Vagina (tissue), 2 donors: ENCODE measurements at regions of chr3 and their contacts with region 1.

Region 1: DNA sequence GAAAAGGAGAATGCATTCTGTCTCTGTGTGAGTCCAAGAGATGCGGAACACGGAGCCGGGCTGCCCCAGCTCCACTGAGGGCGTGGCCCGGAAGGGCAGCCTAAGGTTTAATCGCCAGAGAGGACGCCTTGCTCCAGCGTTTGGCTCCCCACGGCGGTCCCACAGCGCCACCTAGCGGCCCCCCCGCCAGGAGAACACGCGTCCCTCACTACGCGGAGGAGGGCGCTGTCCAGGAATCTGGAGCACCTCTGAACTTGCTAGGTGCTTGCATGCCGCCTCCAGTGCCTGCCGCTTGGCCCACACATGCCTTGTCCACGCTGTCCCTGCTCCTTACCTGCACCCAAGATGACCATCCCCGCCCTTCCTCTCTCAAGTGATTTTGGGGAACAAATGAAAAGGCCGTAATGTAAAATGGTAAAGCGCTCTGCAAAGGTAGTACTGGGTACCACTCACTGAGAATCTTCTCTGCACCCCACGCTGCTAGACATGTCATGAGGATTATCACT is 14.4 kb upstream of the MRPS22 start:
- DNase-seq: peak in 1 of 2 donors; percentile 85
- H3K4me3 ChIP-seq: peak overlapping the region in 1 of 2 donors; percentile 9
- H3K27ac ChIP-seq: peak overlapping the region; percentile 2
- H3K4me1 ChIP-seq: peaks cover 5% of the 10 kb centered on the region
- H3K27me3 ChIP-seq: no peaks in the 10 kb centered on the region
- CTCF ChIP-seq: peak; percentile 86 to 99 (median 99)
- POLR2A ChIP-seq: no peak

Region 2: GRCh38 chr3:139107424-139108252 is 221.8 kb before region 1 on chr3:
- intact Hi-C with region 1: loop called (anchors 10 kb)
- DNase-seq: peak; percentile 61 to 77
- H3K4me3 ChIP-seq: no peak overlapping the region
- H3K27ac ChIP-seq: no peak overlapping the region
- H3K4me1 ChIP-seq: no peaks in the 10 kb centered on the region
- H3K27me3 ChIP-seq: no peaks in the 10 kb centered on the region
- CTCF ChIP-seq: no peak
- POLR2A ChIP-seq: no peak

Region 3: DNA sequence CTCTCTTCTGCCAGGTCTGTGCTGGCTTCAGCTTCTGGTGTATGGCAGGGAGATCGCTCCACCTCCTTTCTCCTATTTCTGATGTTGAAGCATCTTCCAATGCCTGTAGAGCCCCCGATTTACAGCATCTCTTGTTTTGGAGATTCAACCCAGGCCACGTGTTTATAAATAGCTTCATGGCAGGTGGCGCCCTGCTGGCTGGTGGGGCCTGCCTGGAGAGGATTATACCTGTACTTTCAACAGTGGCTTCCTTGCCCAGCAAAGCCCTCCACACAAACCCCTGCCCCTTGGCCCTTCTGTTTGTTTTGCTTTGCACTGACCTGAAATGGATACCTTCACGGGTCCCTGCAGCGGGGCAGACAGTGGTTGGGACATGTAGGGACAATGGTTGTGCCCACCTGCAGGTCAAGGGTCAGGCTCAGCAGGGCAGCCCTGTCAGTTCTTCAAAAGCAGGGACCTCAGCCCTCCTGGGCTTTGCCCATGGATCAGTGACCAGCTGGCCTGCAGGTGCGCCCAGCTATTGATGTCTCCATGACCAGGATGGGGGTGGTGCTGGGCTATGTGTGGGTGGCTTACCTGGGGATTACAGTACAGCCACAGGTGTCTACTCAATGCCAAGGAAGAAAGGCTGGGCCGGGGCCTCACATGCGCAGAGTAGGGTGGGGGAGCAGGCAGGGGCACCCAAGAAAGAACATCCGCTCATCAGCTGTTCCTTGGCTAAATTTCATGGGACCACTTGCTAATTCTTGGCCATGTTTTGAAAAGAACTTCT is 172.1 kb before region 1 on chr3:
- intact Hi-C with region 1: no loop called
- DNase-seq: no peak
- H3K4me3 ChIP-seq: no peak overlapping the region
- H3K27ac ChIP-seq: no peak overlapping the region
- H3K4me1 ChIP-seq: no peaks in the 10 kb centered on the region
- H3K27me3 ChIP-seq: no peaks in the 10 kb centered on the region
- CTCF ChIP-seq: no peak
- POLR2A ChIP-seq: no peak

Region 4: GRCh38 chr3:139202226-139202958 is 127.0 kb before region 1 on chr3:
- intact Hi-C with region 1: no loop called
- DNase-seq: peak in 1 of 2 donors; percentile 67
- H3K4me3 ChIP-seq: no peak overlapping the region
- H3K27ac ChIP-seq: no peak overlapping the region
- H3K4me1 ChIP-seq: no peaks in the 10 kb centered on the region
- H3K27me3 ChIP-seq: no peaks in the 10 kb centered on the region
- CTCF ChIP-seq: no peak
- POLR2A ChIP-seq: no peak

Region 5: DNA sequence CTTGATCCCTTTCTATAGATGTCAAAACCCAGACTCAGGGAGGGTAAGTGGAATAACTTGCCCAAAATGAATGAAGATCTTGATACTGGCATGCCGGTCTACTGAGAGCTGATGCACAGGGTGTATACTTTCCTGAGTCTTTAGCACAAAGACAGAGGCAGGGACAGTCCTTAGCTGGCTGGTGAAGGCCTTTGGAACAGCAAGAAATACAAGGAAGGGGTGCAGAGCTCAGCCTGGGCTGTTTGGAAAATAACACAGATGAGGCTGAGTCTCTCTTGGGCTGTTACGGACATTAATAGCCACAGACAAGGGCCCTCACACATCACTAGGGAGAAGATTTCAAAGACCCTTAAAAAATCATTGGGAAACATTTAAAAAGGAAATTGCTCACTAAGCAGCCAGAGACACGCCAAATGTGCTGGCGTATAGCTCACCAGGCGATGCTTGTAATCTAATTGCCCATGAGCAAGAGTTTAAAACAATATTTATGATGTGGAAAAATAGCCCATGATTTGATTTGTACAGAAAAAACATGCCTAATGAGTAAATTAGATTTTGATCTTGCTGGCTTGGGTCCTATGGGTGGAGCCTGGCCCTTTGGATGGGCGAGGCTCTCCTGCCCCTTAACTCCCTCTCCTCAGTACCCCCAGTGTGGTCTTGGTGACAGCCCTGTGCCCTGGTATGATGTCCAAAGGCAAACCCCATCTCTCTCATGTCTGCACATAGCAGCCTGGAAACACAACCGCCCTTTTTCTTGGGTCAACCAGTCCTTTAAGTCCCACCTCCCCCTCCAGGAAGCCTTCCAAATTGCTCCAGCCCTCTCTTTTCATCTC is 67.4 kb before region 1 on chr3:
- intact Hi-C with region 1: no loop called
- DNase-seq: peak; percentile 77 to 79
- H3K4me3 ChIP-seq: no peak overlapping the region
- H3K27ac ChIP-seq: no peak overlapping the region
- H3K4me1 ChIP-seq: no peaks in the 10 kb centered on the region
- H3K27me3 ChIP-seq: no peaks in the 10 kb centered on the region
- CTCF ChIP-seq: no peak
- POLR2A ChIP-seq: no peak

Region 6: GRCh38 chr3:139288266-139288821 is 41.1 kb before region 1 on chr3:
- intact Hi-C with region 1: no loop called
- DNase-seq: no peak
- H3K4me3 ChIP-seq: no peak overlapping the region
- H3K27ac ChIP-seq: peak overlapping the region; percentile 50
- H3K4me1 ChIP-seq: peaks cover 24% of the 10 kb centered on the region
- H3K27me3 ChIP-seq: no peaks in the 10 kb centered on the region
- CTCF ChIP-seq: no peak
- POLR2A ChIP-seq: no peak